GM10248 (cell line): ENCODE measurements at regions of chr7 and their contacts with region 1.

Region 1: DNA sequence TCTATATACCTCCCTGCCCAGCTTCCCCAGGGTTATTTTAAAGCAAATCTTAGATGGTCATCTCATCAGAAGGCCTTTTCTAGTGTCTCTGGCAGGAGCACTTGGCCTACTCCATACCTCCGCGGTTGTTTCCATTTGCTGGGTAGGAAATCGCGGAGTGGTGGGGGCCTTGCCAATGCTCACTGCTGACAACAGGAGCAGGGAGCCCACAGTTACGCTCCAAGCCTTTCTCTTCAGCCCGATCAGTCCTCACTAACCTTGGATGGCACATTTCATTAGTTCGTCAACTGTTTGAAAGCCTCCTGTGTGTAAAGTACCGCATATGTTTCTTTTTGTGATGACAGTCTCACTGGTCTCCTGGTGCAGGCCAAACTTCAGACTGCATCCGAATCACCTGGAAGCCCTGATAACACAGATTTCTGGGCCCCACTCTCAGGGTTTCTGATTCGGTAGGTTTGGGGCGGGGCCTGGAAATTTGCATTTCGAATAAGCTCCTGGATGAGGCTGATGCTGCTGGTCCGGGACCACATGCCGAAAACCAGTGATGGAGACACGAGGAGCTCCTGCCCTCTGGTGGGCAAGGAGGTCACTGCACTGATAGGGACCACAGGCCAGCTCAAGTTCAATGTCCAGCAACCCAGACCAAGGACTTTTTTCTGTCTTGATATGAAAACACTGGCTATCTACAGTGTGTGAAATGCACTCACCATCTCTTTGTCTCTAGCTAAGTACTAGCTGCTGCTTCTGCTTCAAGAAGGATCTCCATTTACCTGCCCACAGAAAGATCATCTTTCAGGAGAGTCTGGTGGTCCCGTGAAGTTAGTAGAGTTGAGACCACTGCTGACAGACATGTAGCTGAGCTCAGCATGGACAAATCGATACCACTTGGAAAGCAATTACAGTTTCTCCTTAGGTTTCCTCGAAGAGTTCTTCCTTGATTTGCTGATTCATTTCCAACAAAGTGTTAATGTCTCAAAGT is 14.0 kb downstream of the LRGUK start:
- DNase-seq: peak; percentile 78
- CTCF ChIP-seq: peak; percentile 92

Region 2: DNA sequence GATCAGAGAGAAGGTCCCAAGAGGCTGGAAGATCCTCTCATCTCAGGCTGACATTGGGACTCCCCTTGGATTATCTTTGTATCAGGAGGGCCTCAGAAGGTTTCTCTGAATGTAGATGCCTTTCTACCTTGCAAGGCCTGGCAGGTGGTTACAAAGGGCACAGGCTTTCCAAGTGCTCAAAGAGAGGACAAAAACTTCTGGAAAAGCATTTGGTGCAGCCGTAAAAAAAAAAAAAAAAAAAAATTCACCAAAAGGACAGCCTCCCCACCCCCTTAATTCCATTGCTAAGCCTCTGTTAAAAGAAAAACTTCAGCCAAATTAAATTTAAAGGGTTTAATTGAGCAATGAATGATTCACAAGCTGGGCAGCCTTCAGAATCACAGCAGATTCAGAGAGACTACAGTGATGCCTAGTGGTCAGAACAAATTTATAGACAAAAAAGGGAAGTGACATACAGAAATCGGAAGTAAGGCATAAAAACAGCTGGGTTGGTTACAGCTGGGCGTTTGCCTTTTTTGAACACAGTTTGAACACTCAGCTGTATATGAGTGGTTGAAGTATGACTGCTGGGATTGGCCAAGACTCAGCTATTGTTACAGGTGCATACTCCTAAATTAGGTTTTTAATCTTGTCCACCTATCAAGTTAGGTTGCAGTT is 56.6 kb before region 1 on chr7:
- CTCF ChIA-PET with region 1: interaction called, 10 read pairs
- POLR2A ChIA-PET with region 1: no interaction called
- DNase-seq: no peak
- CTCF ChIP-seq: no peak

Region 3: GRCh38 chr7:134126966-134127848 is 14.0 kb before region 1 on chr7 and contains the start of gene LRGUK:
- CTCF ChIA-PET with region 1: interaction called, 41 read pairs
- POLR2A ChIA-PET with region 1: no interaction called
- DNase-seq: peak; percentile 89
- CTCF ChIP-seq: no peak

Region 4: GRCh38 chr7:134154581-134155130 is 13.5 kb after region 1 on chr7:
- CTCF ChIA-PET with region 1: interaction called, 23 read pairs
- POLR2A ChIA-PET with region 1: no interaction called
- DNase-seq: no peak
- CTCF ChIP-seq: no peak

Region 5: GRCh38 chr7:134254311-134254710 is 113.1 kb after region 1 on chr7:
- CTCF ChIA-PET with region 1: no interaction called
- POLR2A ChIA-PET with region 1: no interaction called
- DNase-seq: no peak
- CTCF ChIP-seq: no peak